HAP-1 (cell line): ENCODE measurements at regions of chr4 and their contacts with region 1.

Region 1: GRCh38 chr4:147866532-147867271 is 134.8 kb downstream of the ARHGAP10 start:
- DNase-seq: peak; percentile 95 to 96
- H3K4me3 ChIP-seq: no peak overlapping the region
- H3K4me1 ChIP-seq: peaks cover 15% of the 10 kb centered on the region
- H3K27me3 ChIP-seq: no peaks in the 10 kb centered on the region

Region 2: DNA sequence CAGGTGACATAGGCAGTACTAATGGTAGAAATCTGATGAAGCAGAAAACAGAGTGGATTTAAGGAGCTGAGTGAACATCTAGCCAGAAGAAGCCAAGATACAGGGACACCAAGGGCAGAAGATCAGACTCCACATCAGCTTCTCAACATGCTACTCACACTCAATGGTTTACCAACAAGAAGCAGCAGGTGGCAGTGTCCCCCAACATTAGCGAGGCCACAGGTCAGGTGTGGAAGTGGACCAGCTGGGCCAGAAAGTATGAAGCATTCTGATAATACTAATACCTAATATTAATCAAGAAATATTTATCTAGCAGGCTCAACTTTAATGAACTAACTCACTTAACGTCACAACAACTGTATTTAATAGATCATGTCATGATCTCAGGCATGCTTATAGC is 847.6 kb before region 1 on chr4:
- in situ Hi-C with region 1: no loop called
- DNase-seq: peak; percentile 5 to 69
- H3K4me3 ChIP-seq: no peak overlapping the region
- H3K4me1 ChIP-seq: no peaks in the 10 kb centered on the region
- H3K27me3 ChIP-seq: peaks cover 5% of the 10 kb centered on the region; the same call in 1 of the 2 replicates

Region 3: GRCh38 chr4:147518846-147519767 is 347.6 kb before region 1 on chr4:
- in situ Hi-C with region 1: loop called (anchors 25 kb)
- DNase-seq: peak; percentile 73 to 79
- H3K4me3 ChIP-seq: no peak overlapping the region
- H3K4me1 ChIP-seq: no peaks in the 10 kb centered on the region
- H3K27me3 ChIP-seq: no peaks in the 10 kb centered on the region

Region 4: GRCh38 chr4:147617173-147617840 is 249.4 kb before region 1 on chr4 and contains the start of gene TMEM184C:
- in situ Hi-C with region 1: loop called (anchors 10 kb)
- DNase-seq: peak; percentile 91 to 99
- H3K4me3 ChIP-seq: peak within 1 kb of the TSS; percentile 91
- H3K4me1 ChIP-seq: peaks cover 16% of the 10 kb centered on the region
- H3K27me3 ChIP-seq: no peaks in the 10 kb centered on the region

Region 5: GRCh38 chr4:147707865-147708672 is 158.6 kb before region 1 on chr4:
- in situ Hi-C with region 1: loop called (anchors 10 kb)
- DNase-seq: peak in 1 of 2 experiments; percentile 64
- H3K4me3 ChIP-seq: no peak overlapping the region
- H3K4me1 ChIP-seq: peaks cover 1% of the 10 kb centered on the region; the same call in 1 of the 2 replicates
- H3K27me3 ChIP-seq: no peaks in the 10 kb centered on the region